ENCODE measurements at regions of chr1 and their contacts with region 1.

Region 1: DNA sequence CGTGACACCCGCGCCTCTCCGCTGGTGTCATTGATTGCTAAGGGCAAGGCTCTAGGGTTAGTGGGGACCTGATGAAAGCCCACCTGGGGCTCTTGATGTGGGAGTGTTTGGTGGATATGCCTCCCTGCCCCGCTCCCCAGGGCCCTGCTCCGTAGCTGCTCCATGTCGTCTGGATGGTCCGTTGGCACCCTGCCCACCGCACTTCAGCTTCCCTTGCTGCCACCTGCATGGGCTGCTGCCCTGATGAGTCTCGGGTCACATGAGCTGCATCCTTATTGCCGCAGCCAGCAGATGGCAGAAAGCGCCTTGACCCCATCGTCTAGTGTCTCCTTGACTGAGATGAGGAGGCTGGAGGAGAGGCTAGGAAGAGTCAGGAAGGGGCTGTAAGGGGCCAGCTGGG is 439.4 kb downstream of the CAMTA1 start:
- DNase-seq: peak; percentile 35
- H3K4me3 ChIP-seq: no peak overlapping the region
- H3K27ac ChIP-seq: no peak overlapping the region
- H3K4me1 ChIP-seq: no peaks in the 10 kb centered on the region
- H3K27me3 ChIP-seq: no peaks in the 10 kb centered on the region
- CTCF ChIP-seq: peak; percentile 17

Region 2: DNA sequence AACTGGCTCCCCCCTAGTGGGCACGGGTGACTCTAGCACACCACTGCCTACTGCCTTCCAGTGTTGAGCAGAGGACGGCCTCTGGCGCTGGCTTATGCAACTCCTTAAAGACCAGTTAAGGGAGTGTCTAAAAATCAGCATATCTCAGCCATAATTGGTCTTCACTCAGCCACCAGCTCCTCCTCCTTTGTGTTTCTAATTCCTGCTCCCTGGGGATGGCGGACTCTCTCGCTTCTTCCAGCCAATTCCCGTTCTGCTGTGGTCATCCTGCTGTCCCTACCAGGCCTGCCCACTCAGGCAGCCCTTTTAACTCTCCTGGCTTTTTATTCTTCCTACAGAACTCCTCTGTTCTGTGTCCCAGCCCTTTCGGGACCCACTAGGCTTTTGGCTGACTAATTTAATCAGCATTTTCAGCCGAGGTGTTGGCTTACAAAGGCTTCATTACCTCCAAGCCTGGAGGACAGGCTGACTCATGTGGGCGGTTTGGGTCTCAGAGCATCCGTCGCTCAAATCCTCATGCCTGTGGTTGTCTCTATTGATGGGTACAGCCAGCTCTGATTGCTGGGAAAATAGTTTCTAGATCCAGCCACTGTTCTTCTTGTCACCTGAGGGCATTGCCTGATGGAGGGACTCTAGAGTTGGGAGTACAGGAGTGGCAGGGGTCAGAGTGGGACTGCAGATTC is 106.9 kb before region 1 on chr1:
- intact Hi-C with region 1: no loop called
- DNase-seq: no peak
- H3K4me3 ChIP-seq: no peak overlapping the region
- H3K27ac ChIP-seq: no peak overlapping the region
- H3K4me1 ChIP-seq: no peaks in the 10 kb centered on the region
- H3K27me3 ChIP-seq: no peaks in the 10 kb centered on the region
- CTCF ChIP-seq: no peak

Region 3: DNA sequence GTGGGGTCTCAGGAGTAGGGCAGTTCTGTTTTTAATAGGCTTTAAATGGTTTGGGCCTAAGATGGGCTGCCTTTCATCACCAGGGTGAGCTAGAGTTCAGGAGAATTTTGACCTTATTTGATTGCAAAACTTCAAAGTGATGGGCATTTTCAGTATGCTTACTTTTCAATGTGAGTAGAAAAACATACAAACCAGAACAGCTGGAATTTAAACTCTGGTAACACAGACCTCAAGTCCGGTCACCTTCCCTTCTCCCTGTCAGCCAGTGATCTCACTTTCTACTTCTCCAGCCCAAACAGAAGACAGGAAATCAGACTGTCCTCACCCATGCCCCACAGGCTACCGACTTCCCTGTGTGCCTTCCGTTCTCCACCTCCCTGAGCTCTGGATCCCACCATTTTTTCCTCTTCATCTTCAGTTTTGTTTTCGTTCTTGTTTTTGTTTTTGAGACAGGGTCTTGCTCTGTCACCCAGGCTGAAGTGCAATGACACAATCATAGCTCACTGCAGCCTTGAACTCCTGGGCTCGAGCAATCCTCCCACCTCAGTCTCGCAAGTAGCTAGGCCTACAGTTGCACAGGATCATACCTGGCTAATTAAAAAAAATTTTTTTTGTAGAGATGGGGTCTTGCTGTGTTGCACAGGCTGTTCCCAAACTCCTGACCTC is 65.4 kb before region 1 on chr1:
- intact Hi-C with region 1: no loop called
- DNase-seq: no peak
- H3K4me3 ChIP-seq: no peak overlapping the region
- H3K27ac ChIP-seq: no peak overlapping the region
- H3K4me1 ChIP-seq: no peaks in the 10 kb centered on the region
- H3K27me3 ChIP-seq: no peaks in the 10 kb centered on the region
- CTCF ChIP-seq: no peak

Region 4: GRCh38 chr1:7539769-7540175 is 315.1 kb after region 1 on chr1:
- intact Hi-C with region 1: loop called (anchors 10 kb)
- DNase-seq: peak; percentile 58
- H3K4me3 ChIP-seq: no peak overlapping the region
- H3K27ac ChIP-seq: no peak overlapping the region
- H3K4me1 ChIP-seq: no peaks in the 10 kb centered on the region
- H3K27me3 ChIP-seq: no peaks in the 10 kb centered on the region
- CTCF ChIP-seq: peak; percentile 25